Right ventricle myocardium inferior (tissue), 1 donor: ENCODE measurements at regions of chr4 and their contacts with region 1.

Region 1: DNA sequence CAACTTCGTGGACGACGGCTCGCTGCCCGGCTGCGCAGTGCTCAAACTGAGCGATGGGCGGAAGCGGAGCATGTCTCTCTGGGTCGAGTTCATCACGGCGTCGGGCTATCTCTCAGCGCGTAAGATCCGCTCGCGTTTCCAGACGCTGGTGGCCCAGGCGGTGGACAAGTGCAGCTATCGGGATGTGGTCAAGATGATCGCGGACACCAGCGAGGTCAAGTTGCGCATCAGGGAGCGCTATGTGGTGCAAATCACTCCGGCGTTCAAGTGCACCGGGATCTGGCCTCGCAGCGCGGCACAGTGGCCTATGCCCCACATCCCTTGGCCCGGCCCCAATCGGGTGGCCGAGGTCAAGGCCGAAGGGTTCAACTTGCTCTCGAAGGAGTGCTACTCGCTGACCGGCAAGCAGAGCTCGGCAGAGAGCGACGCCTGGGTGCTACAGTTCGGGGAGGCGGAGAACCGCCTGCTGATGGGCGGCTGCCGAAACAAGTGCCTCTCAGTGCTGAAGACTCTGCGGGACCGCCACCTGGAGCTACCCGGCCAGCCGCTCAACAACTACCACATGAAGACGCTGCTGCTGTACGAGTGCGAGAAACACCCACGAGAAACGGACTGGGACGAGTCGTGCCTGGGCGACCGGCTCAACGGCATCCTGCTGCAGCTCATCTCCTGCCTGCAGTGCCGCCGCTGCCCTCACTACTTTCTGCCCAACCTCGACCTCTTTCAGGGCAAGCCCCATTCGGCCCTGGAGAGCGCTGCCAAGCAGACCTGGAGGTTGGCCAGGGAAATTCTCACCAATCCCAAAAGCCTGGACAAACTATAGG is 1.5 kb downstream of the MAB21L2 start:
- DNase-seq: peak; percentile 63
- ATAC-seq: peak; percentile 68

Region 2: GRCh38 chr4:150145090-150145949 is 438.2 kb before region 1 on chr4:
- intact Hi-C with region 1: no loop called
- DNase-seq: no peak
- ATAC-seq: no peak

Region 3: DNA sequence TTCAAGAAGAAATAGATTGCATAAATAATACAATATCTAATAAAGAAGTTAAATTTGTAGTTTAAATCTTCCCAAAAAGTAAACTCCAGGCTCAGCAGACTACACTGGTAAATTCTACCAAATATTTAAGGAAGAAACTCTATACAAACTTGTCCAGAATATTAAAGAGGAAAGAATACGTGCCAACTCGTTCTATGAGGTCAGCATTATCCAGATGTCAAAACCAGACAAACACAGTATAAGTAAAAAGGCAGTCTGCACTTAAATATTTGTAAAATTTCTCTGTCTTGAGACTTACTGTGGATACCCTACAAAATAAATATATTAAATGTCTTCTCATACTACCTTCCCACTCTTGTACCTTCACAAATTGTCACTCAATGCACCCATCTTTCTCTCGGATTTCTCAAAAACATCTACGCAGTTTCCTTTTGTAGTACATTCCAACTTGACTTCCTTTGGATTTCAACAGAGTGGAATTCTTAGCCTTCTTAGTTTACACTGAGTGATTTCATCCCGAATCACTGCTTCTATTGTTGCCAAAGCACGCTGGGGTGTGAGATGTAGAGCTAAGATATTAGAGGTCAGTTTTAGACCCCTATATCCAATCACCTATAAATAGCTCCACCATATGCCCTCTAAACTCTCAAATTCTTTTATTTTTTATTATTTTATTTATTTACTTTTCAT is 73.2 kb before region 1 on chr4:
- intact Hi-C with region 1: loop called (anchors 10 kb)
- DNase-seq: no peak
- ATAC-seq: no peak

Region 4: GRCh38 chr4:150625033-150625432 is 41.5 kb after region 1 on chr4:
- intact Hi-C with region 1: no loop called
- DNase-seq: no peak
- ATAC-seq: no peak

Region 5: DNA sequence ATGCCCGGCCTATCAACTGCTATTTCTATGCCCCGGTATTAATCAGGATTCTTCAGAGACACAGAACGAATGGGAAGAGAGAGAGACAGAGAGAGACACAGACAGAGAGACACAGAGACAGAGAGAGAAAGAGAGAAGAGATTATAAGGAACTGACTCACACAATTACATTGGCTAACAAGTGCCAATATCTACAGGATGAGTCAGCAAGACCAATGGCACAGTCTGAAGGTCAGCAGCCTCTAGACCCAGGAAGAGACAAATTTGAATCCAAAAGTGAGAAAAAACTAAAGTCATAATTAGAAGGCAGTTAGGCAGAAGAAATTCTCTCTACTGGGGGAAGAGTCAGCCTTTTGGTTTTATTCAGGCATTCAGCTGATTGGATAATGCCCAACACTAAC is 185.7 kb after region 1 on chr4:
- intact Hi-C with region 1: no loop called
- DNase-seq: no peak
- ATAC-seq: no peak

Region 6: GRCh38 chr4:151238477-151238876 is 655.0 kb after region 1 on chr4:
- intact Hi-C with region 1: no loop called
- DNase-seq: no peak
- ATAC-seq: peak; percentile 54